BJ (cell line): ENCODE measurements at regions of chr7 and their contacts with region 1.

Region 1: DNA sequence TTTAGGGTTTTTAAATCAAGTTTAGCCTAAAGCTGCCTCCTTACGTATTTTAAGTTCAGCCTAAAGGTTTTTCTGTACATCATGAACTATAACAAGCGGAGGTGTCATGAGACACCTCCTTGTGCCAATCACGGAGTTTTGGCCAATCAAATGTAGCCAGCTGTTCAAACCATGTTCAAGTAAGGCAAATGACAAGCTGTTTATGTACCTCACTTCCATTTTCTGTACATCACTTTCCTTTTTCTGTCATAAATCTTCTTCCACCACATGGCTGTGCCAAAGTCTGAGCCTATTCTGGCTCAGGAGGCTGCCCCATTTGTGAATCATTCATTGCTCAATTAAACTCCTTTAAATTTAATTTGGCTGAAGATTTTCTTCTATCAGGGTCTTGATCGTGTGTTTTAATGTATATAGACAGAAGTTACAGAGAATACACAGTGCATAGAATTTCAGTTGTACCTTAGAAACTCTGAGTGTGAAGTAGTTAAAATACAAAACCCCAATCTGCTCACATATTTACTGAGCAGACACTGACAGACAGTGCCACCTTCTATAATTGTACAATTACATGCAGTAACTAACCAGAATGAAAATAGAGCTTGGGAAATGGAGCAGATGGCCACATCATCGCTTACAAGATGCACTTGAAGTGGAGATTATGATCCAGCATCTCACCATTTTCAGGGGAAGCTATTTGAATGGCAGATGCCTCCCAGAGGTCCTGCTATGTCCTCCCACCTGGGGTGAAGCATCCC is 76.9 kb upstream of the LANCL2 start:
- DNase-seq: no peak
- H3K4me3 ChIP-seq: no peak overlapping the region
- H3K27me3 ChIP-seq: peaks cover 12% of the 10 kb centered on the region
- CTCF ChIP-seq: no peak

Region 2: DNA sequence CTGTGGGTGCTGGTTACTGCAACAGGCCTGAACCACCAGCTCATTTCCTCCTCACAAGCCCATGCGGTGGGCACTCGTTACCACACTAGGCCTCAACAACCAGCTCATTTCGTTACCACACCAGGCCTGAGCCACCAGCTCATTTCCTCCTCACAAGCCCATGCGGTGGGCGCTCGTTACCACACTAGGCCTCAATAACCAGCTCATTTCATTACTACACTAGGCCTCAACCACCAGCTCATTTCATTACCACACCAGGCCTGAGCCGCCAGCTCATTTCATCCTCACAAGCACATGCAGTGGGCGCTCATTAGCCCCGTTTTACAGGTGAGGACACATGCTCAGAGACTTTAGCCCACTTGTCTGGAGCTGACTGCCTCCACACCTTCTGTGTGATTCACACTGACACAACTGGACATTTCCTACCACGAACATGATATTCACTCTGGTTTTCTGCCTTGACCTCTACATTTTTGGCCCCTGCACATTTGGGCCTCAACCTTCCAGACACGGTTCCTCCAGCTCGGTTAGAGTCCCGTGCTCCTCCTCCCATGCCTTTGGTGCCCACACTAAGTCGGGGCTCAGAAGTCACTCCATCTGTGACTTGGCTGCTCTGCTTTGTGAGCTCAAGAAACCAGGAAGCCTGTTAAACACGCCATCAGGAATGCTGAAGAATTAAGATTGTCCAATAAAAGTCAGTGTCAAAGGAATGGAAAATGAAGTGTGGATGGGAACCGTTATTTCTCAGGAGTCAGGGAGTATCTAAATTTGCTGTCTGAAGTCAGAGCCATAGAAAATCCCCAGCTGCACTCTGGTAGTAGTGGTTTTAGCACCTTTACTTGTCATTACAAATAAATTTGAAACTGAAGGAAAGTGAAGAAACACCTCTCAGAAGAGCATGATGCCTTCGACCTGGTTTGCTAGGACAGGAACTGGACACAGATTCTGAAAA is 21.1 kb after region 1 on chr7:
- CTCF ChIA-PET with region 1: interaction called, 14 read pairs
- POLR2A ChIA-PET with region 1: no interaction called
- DNase-seq: no peak
- H3K4me3 ChIP-seq: no peak overlapping the region
- H3K27me3 ChIP-seq: no peaks in the 10 kb centered on the region
- CTCF ChIP-seq: no peak